ENCODE measurements at regions of chr12 and their contacts with region 1.

Region 1: DNA sequence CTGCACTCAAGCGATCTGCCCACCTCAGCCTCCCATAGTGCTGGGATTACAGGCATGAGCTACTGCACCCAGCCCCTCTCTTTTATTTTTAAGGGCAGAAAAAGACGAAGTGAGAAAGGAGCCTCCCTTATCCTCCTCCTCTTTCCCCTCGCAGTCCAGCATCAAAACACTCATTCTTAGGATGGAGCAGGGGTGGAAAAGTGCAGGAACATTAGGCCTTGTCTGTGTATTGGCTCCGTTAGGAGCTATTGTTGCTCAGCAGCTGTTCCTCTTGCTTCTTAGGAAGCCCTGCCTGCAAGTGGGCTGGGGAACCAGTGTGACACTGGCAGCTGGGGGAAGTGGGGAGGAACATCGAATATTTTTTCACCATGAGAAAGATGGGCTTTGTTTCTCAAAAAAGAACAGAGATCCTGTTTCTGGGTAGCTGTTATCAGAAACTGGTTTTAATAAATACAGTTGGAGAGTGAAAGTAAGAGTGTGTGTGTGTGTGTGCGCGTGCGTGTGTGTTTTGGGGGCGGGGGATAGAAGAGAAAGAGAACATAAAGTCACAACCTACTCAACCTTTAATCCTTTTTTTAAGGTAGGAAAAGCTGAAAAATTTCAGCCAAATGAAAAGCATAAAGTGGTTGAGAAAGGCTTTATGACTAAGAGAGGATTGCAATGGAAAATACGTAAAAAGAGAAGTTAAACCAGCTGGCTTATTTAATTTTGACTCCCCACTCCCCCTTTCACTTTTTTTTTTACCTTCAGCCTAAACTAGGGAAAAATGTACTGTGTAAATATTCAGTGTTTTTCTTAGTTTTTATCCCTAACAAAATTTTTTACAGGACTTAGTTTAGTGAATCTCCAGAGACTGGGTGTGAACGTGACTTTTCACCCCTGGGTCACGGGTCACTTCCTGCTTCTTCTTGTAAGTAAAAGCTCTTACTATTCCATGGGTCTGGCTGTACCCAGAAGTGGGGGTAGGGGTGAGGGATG is 197.2 kb upstream of the PLEKHG7 start:
- DNase-seq: peak; percentile 88 to 92 (median 90)
- H3K4me3 ChIP-seq: peak overlapping the region; percentile 19
- H3K27ac ChIP-seq: peak overlapping the region; percentile 75 to 89
- H3K4me1 ChIP-seq: peaks cover 32% of the 10 kb centered on the region
- H3K27me3 ChIP-seq: no peaks in the 10 kb centered on the region
- CTCF ChIP-seq: no peak
- EP300 ChIP-seq: no peak
- POLR2A ChIP-seq: no peak

Region 2: GRCh38 chr12:92539976-92540781 is 34.6 kb after region 1 on chr12:
- intact Hi-C with region 1: loop called in 1 of 4 experiments (anchors 5 kb)
- DNase-seq: no peak
- H3K4me3 ChIP-seq: no peak overlapping the region
- H3K27ac ChIP-seq: no peak overlapping the region
- H3K4me1 ChIP-seq: peaks cover 19% of the 10 kb centered on the region
- H3K27me3 ChIP-seq: no peaks in the 10 kb centered on the region
- CTCF ChIP-seq: no peak
- EP300 ChIP-seq: no peak
- POLR2A ChIP-seq: no peak

Region 3: DNA sequence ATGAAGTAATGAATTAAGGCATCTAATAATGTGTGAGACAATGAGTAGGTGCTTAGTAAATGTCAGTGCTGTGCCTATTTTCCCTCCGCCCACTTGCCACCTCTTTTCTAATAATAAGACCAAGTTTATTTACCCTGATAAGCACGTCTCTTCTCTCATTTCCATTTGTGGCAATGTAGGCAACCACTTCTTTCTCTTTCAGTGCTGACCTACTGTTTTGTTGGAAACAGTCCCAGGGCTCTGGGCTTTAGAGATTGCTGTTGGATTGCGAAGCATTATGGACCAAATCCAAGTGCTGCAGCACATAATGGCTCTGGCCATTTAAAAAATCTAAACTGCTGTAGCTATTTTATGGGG is 56.0 kb after region 1 on chr12:
- intact Hi-C with region 1: loop called in 1 of 4 experiments (anchors 10 kb)
- DNase-seq: peak in 2 of 5 donors; percentile 27 to 39
- H3K4me3 ChIP-seq: no peak overlapping the region
- H3K27ac ChIP-seq: peak overlapping the region in 1 of 2 donors; percentile 16
- H3K4me1 ChIP-seq: peaks cover 3% of the 10 kb centered on the region
- H3K27me3 ChIP-seq: no peaks in the 10 kb centered on the region
- CTCF ChIP-seq: no peak
- EP300 ChIP-seq: no peak
- POLR2A ChIP-seq: no peak

Region 4: DNA sequence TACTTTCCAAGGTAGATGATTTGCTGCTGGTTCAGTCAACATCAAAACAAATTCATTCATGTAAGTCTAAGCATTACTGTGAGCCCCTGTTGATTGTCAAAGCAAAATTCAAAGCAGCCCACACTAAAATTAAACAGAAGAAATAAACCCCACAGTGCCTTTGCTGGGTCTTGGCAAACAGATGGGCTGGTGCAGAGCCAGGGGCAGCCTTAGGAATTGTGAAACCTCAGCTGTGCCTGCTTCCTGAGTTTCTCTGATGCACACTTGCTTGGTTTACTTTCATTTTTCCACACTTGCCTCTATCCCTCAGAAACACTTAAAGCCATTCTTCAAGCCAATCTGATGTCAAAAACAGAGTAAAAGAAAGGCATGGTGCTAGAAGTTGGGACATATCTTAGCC is 190.7 kb after region 1 on chr12:
- intact Hi-C with region 1: no loop called
- DNase-seq: no peak
- H3K4me3 ChIP-seq: no peak overlapping the region
- H3K27ac ChIP-seq: no peak overlapping the region
- H3K4me1 ChIP-seq: no peaks in the 10 kb centered on the region
- H3K27me3 ChIP-seq: no peaks in the 10 kb centered on the region
- CTCF ChIP-seq: no peak
- EP300 ChIP-seq: no peak
- POLR2A ChIP-seq: no peak

Region 5: DNA sequence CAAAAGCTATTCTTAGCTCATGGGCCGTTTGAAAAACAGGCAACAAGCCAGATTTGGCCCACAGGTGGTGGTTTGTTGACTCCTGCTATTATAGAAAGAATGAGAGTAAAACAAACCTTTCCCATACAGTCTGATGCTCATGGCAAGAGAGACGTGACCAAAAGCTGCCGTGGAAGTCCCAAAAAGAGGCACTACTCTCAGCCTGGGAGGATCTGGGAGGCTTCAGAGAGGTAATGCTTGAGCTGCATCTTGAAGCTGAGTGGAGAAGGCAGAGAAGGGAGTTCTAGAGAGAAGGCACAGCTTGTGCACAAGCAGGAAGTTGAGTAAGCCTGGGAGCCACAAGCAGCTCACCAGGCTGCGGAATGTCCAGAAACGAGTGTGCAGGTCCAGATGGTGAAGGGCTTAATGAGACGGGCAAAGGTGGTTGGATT is 1652.5 kb after region 1 on chr12:
- intact Hi-C with region 1: no loop called
- DNase-seq: no peak
- H3K4me3 ChIP-seq: no peak overlapping the region
- H3K27ac ChIP-seq: no peak overlapping the region
- H3K4me1 ChIP-seq: no peaks in the 10 kb centered on the region
- H3K27me3 ChIP-seq: no peaks in the 10 kb centered on the region
- CTCF ChIP-seq: no peak
- EP300 ChIP-seq: no peak
- POLR2A ChIP-seq: no peak

Measured in ovary (tissue), 10 donors.